Activated naive CD4-positive, alpha-beta T cell treated with anti-CD3 and anti-CD28 coated beads for 36 hours (primary cell): ENCODE measurements at regions of chr2 and their contacts with region 1.

Region 1: DNA sequence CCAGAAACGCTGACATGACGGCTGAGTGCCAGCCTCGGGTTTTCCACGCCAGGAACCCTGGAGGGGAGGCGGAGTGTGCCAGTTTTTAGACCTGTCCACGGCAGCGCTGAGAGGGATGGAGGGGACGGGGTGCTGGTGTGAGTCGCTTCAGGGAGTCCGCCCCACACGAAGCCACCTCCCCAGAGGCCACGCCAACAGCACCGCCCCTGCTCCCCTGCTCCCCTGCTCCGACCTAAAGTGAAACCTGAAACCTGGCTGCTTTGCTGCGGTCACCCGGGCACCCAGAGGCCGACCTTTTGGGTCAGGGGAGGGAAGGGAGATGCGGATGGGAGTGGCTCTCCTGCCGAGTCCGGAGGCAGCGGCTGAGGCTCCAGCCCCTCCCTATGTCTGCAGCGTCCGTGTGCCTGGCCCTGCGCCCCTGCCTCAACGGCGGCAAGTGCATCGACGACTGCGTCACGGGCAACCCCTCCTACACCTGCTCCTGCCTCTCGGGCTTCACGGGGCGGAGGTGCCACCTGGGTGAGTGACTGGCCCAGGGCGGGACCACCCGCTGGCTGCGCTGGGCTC is 38.1 kb downstream of the SNED1 start:
- DNase-seq: peak; percentile 72
- H3K4me3 Mint-ChIP-seq: peak overlapping the region; percentile 63
- H3K27ac Mint-ChIP-seq: no peak overlapping the region
- H3K4me1 Mint-ChIP-seq: peaks cover 15% of the 10 kb centered on the region
- H3K27me3 Mint-ChIP-seq: no peaks in the 10 kb centered on the region

Region 2: GRCh38 chr2:241009601-241010530 is 26.6 kb before region 1 on chr2:
- CTCF ChIA-PET with region 1: no interaction called
- intact Hi-C with region 1: loop called (anchors 2 kb)
- DNase-seq: peak; percentile 79
- H3K4me3 Mint-ChIP-seq: peak overlapping the region; percentile 45
- H3K27ac Mint-ChIP-seq: peak overlapping the region; percentile 56
- H3K4me1 Mint-ChIP-seq: peaks cover 32% of the 10 kb centered on the region
- H3K27me3 Mint-ChIP-seq: no peaks in the 10 kb centered on the region